Caco-2 (cell line): ENCODE measurements at regions of chr2 and their contacts with region 1.

Region 1: GRCh38 chr2:111883661-111884591 is at the start of gene ANAPC1:
- DNase-seq: peak; percentile 88 to 92
- H3K4me3 ChIP-seq: peak within 1 kb of the TSS; percentile 93
- H3K4me3 Mint-ChIP-seq: peak within 1 kb of the TSS; percentile 83
- H3K27ac Mint-ChIP-seq: peak within 1 kb of the TSS; percentile 88
- H3K4me1 ChIP-seq: peaks cover 4% of the 10 kb centered on the region; the same call in 1 of the 2 replicates
- H3K4me1 Mint-ChIP-seq: no peaks in the 10 kb centered on the region
- H3K27me3 ChIP-seq: no peaks in the 10 kb centered on the region
- H3K27me3 Mint-ChIP-seq: no peaks in the 10 kb centered on the region
- CTCF ChIP-seq: peak in 1 of 2 experiments; percentile 17
- total RNA-seq, gene ANAPC1: 97.2 and 110 TPM in 2 replicates

Region 2: DNA sequence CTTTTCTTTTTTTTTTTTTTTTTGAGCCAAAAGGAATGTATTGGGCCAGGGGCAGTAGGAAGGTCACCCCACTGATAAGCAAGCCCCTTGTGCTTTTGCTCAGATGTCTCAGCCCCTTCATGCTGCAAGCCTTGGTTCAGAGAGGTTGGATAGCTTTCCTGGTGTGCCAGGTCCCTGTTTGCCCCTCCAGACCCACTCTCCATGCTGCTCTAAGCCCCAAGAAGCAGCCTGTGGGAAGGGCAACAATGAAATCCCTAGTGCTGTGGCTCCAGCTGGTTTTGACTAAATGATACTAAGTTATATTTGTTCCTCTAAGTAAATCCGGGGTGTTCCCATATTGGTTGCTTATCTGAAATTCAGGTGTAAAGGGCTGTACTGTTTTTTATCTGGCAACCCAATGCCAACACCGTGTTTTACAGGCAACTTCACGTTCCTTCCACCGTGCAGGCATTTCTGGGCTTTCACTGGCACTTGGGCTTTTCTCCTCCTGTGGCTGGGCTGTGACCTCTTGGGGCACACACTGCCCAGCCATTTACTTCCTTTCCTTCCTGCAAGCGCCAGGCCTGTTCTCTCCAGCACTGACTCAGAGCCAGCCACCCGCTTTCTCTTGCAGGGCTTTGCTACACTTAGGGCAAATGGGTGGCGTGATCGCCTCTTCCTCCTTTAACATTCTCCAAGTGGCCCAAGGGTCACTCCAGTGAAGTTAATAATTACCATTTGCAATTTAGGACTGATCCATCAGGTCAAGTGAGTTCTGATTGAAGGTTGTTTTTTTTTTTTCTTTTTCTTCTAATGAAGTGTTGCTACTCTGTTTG is 36.1 kb after region 1 on chr2:
- CTCF ChIA-PET with region 1: interaction called, 7 read pairs
- POLR2A ChIA-PET with region 1: no interaction called
- intact Hi-C with region 1: loop called (anchors 5 kb)
- DNase-seq: peak; percentile 85 to 92
- H3K4me3 ChIP-seq: peak overlapping the region; percentile 18; the same call in 1 of the 2 replicates
- H3K4me3 Mint-ChIP-seq: peak overlapping the region; percentile 62
- H3K27ac Mint-ChIP-seq: peak overlapping the region; percentile 82
- H3K4me1 ChIP-seq: peaks cover 53% of the 10 kb centered on the region
- H3K4me1 Mint-ChIP-seq: peaks cover 49% of the 10 kb centered on the region
- H3K27me3 ChIP-seq: no peaks in the 10 kb centered on the region
- H3K27me3 Mint-ChIP-seq: no peaks in the 10 kb centered on the region
- CTCF ChIP-seq: no peak

Region 3: DNA sequence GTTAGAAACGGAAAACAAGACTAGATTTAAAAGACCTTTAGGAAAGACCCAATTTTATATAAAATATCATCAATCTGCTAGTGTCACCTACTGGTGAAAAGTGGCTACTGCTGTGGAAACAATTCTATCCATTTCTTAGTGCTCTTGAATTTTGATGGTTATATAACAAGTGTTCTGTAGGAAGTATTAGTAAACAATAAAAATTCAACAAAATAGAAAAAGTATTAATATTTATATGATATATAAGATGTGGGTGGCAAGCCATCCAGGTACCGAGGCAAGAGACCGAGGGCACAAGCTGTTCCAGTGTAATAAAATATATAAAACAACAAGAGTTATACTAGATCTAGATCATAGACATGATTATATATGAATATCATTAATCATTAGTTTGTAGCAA is 165.0 kb after region 1 on chr2:
- CTCF ChIA-PET with region 1: interaction called, 13 read pairs
- POLR2A ChIA-PET with region 1: no interaction called
- intact Hi-C with region 1: loop called (anchors 1 kb)
- DNase-seq: peak in 1 of 2 experiments; percentile 51
- H3K4me3 ChIP-seq: no peak overlapping the region
- H3K4me3 Mint-ChIP-seq: no peak overlapping the region
- H3K27ac Mint-ChIP-seq: no peak overlapping the region
- H3K4me1 ChIP-seq: peaks cover 26% of the 10 kb centered on the region
- H3K4me1 Mint-ChIP-seq: peaks cover 21% of the 10 kb centered on the region
- H3K27me3 ChIP-seq: no peaks in the 10 kb centered on the region
- H3K27me3 Mint-ChIP-seq: no peaks in the 10 kb centered on the region
- CTCF ChIP-seq: peak; percentile 71 to 81

Region 4: GRCh38 chr2:112054847-112055729 is 171.2 kb after region 1 on chr2 and contains the start of gene TMEM87B:
- CTCF ChIA-PET with region 1: interaction called, 12 read pairs
- POLR2A ChIA-PET with region 1: interaction called, 4 read pairs
- intact Hi-C with region 1: no loop called
- DNase-seq: peak; percentile 99
- H3K4me3 ChIP-seq: peak within 1 kb of the TSS; percentile 87
- H3K4me3 Mint-ChIP-seq: peak within 1 kb of the TSS; percentile 85
- H3K27ac Mint-ChIP-seq: peak within 1 kb of the TSS; percentile 72
- H3K4me1 ChIP-seq: peaks cover 15% of the 10 kb centered on the region
- H3K4me1 Mint-ChIP-seq: peaks cover 14% of the 10 kb centered on the region
- H3K27me3 ChIP-seq: no peaks in the 10 kb centered on the region
- H3K27me3 Mint-ChIP-seq: no peaks in the 10 kb centered on the region
- CTCF ChIP-seq: no peak
- total RNA-seq, gene TMEM87B: 16.3 and 17.1 TPM in 2 replicates

Region 5: DNA sequence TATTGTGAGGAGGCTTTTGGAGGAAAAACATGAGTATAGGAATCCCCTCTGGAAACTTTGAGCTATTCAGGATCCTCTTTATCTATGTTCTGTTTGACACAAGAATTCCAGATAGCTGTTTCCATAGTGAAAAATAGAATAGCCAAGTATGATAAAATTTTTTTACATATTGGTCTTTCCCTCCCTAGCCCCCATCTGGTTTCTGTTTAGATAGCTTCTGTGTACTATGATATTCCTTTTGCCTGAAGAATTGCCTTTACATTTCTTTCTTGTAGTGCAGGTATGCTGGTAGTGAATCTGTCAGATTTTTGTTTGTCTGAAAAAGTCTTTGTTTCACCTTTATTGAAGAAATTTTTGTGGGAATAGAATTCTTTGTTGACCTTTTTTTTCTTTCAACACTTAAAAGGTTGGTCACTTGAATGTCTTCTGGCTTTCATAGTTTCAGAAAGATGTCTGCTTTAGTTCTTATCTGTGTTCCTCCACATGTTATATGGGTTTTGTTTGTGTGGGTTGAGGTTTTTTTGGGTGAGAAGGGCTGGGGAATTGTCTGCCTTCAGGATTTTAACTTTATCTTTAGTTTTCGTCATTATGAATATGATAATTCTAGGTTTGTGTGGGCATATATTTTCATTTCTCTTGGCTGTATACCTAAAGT is 224.4 kb after region 1 on chr2:
- CTCF ChIA-PET with region 1: no interaction called
- POLR2A ChIA-PET with region 1: no interaction called
- intact Hi-C with region 1: no loop called
- DNase-seq: no peak
- H3K4me3 ChIP-seq: no peak overlapping the region
- H3K4me3 Mint-ChIP-seq: no peak overlapping the region
- H3K27ac Mint-ChIP-seq: no peak overlapping the region
- H3K4me1 ChIP-seq: no peaks in the 10 kb centered on the region
- H3K4me1 Mint-ChIP-seq: no peaks in the 10 kb centered on the region
- H3K27me3 ChIP-seq: no peaks in the 10 kb centered on the region
- H3K27me3 Mint-ChIP-seq: no peaks in the 10 kb centered on the region
- CTCF ChIP-seq: no peak

Region 6: GRCh38 chr2:112254466-112255239 is 370.7 kb after region 1 on chr2 and contains the start of gene ZC3H8:
- CTCF ChIA-PET with region 1: no interaction called
- POLR2A ChIA-PET with region 1: no interaction called
- intact Hi-C with region 1: loop called (anchors 10 kb)
- DNase-seq: peak; percentile 94 to 97
- H3K4me3 ChIP-seq: peak within 1 kb of the TSS; percentile 91
- H3K4me3 Mint-ChIP-seq: peak within 1 kb of the TSS; percentile 78
- H3K27ac Mint-ChIP-seq: peak within 1 kb of the TSS; percentile 63
- H3K4me1 ChIP-seq: peaks cover 10% of the 10 kb centered on the region; the same call in 1 of the 2 replicates
- H3K4me1 Mint-ChIP-seq: peaks cover 4% of the 10 kb centered on the region
- H3K27me3 ChIP-seq: no peaks in the 10 kb centered on the region
- H3K27me3 Mint-ChIP-seq: no peaks in the 10 kb centered on the region
- CTCF ChIP-seq: no peak
- total RNA-seq, gene ZC3H8: 17.6 and 19.9 TPM in 2 replicates

Region 7: GRCh38 chr2:112606488-112606902 is 722.6 kb after region 1 on chr2:
- CTCF ChIA-PET with region 1: no interaction called
- POLR2A ChIA-PET with region 1: no interaction called
- intact Hi-C with region 1: no loop called
- DNase-seq: no peak
- H3K4me3 ChIP-seq: no peak overlapping the region
- H3K4me3 Mint-ChIP-seq: no peak overlapping the region
- H3K27ac Mint-ChIP-seq: no peak overlapping the region
- H3K4me1 ChIP-seq: no peaks in the 10 kb centered on the region
- H3K4me1 Mint-ChIP-seq: peaks cover 2% of the 10 kb centered on the region
- H3K27me3 ChIP-seq: no peaks in the 10 kb centered on the region
- H3K27me3 Mint-ChIP-seq: no peaks in the 10 kb centered on the region
- CTCF ChIP-seq: no peak

Region 8: DNA sequence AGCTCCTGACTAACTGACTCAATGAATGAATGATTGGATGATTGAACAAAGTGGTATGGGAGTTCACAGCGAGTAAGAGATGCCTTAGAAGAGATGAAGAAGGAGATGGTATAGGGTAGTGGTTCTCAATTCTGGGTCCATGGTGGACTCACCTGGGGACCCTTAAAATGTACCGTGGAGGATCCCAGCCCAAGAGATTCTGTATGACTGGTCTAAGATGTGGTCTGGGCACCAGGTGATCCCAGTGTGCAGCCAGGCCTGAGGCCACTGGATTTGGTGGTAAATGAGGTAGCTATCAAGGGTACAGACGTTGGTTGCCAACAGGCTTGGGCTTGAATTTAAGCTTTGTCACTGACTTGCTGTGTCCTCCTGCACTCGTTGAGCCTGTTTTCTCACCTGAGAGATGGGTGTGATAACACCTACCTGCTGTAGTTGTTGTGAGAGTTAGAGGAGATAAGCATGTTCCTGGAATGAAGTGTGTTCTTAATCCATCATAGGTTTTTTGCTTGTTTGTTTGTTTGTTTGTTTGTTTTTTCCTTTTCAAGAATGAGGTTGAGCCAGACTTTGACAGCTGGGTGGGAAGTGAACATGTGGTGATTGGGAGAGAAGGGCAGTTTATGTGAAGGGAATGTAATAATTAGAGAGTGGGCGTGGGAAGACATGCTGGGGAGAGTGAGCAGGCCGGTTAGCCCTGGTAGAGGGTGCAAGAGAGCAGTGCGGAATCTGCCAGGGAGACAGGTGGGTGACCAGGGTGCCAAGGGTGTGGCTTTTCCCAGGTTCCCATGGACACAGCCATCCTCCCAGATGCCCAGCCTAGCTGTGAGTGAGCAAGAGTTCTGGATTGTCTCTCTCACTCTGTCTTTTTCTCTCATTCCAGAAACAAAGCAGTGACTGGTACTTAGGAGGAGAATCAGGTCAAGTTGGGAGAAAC is 984.0 kb after region 1 on chr2:
- CTCF ChIA-PET with region 1: no interaction called
- POLR2A ChIA-PET with region 1: no interaction called
- intact Hi-C with region 1: no loop called
- DNase-seq: no peak
- H3K4me3 ChIP-seq: no peak overlapping the region
- H3K4me3 Mint-ChIP-seq: no peak overlapping the region
- H3K27ac Mint-ChIP-seq: no peak overlapping the region
- H3K4me1 ChIP-seq: no peaks in the 10 kb centered on the region
- H3K4me1 Mint-ChIP-seq: no peaks in the 10 kb centered on the region
- H3K27me3 ChIP-seq: no peaks in the 10 kb centered on the region
- H3K27me3 Mint-ChIP-seq: peaks cover 4% of the 10 kb centered on the region
- CTCF ChIP-seq: no peak